ENCODE measurements at regions of chr15 and their contacts with region 1.

Region 1: GRCh38 chr15:39874890-39875549 is 45.0 kb downstream of the GPR176 start:
- DNase-seq: peak; percentile 43
- H3K4me3 ChIP-seq: no peak overlapping the region
- H3K27ac ChIP-seq: no peak overlapping the region
- H3K4me1 ChIP-seq: no peaks in the 10 kb centered on the region
- H3K27me3 ChIP-seq: no peaks in the 10 kb centered on the region
- CTCF ChIP-seq: peak; percentile 49

Region 2: GRCh38 chr15:38714309-38715072 is 1160.5 kb before region 1 on chr15:
- intact Hi-C with region 1: loop called (anchors 5 kb)
- DNase-seq: no peak
- H3K4me3 ChIP-seq: no peak overlapping the region
- H3K27ac ChIP-seq: no peak overlapping the region
- H3K4me1 ChIP-seq: peaks cover 1% of the 10 kb centered on the region
- H3K27me3 ChIP-seq: no peaks in the 10 kb centered on the region
- CTCF ChIP-seq: no peak

Region 3: GRCh38 chr15:39692356-39693327 is 182.4 kb before region 1 on chr15:
- intact Hi-C with region 1: loop called (anchors 10 kb)
- DNase-seq: no peak
- H3K4me3 ChIP-seq: no peak overlapping the region
- H3K27ac ChIP-seq: no peak overlapping the region
- H3K4me1 ChIP-seq: no peaks in the 10 kb centered on the region
- H3K27me3 ChIP-seq: no peaks in the 10 kb centered on the region
- CTCF ChIP-seq: no peak

Region 4: DNA sequence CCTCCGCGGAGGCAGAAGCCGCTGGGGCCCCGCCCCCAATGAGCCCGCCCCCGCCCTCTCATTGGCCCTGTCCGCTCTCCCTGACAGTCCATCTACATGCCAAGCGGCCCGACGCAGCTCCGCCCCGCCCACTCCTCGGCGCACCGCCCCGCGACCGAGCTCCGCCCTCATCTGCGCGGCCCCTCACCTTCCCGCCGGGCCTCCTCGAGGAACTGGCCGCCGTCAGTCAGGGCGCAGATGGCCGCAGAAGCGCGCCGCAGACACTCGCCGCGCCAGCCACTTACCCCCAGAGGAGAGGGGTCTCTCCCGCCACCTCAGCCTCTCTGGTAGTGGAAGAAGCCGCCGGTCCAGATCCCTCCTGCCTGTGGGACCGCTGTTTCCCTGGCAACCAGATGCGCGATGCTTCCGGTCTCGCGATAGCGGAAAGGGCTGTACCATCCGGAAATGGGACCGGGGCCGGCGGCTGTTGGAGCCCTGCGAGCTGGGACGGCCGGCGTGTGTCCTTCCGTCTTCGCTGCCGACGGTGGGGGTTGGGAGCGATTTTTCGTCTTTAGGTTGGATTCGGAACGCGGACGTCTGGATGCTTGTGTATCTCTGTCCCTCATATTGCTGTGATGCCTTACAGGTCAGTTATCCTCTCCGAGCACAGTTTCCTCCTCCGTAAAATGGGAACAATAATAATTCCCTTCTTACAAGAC is 92.4 kb before region 1 on chr15 and contains the start of gene FSIP1:
- intact Hi-C with region 1: loop called (anchors 5 kb)
- DNase-seq: peak; percentile 98
- H3K4me3 ChIP-seq: peak within 1 kb of the TSS; percentile 81
- H3K27ac ChIP-seq: peak within 1 kb of the TSS; percentile 82
- H3K4me1 ChIP-seq: no peaks in the 10 kb centered on the region
- H3K27me3 ChIP-seq: no peaks in the 10 kb centered on the region
- CTCF ChIP-seq: no peak
- total RNA-seq, gene FSIP1: 4.1 to 5.3 TPM

Region 5: GRCh38 chr15:39801641-39802309 is 73.2 kb before region 1 on chr15:
- intact Hi-C with region 1: loop called (anchors 5 kb)
- DNase-seq: peak; percentile 32
- H3K4me3 ChIP-seq: no peak overlapping the region
- H3K27ac ChIP-seq: no peak overlapping the region
- H3K4me1 ChIP-seq: no peaks in the 10 kb centered on the region
- H3K27me3 ChIP-seq: no peaks in the 10 kb centered on the region
- CTCF ChIP-seq: peak; percentile 22

Measured in colonic mucosa (tissue), 4 donors.